ENCODE measurements at regions of chr9 and their contacts with region 1.

Region 1: DNA sequence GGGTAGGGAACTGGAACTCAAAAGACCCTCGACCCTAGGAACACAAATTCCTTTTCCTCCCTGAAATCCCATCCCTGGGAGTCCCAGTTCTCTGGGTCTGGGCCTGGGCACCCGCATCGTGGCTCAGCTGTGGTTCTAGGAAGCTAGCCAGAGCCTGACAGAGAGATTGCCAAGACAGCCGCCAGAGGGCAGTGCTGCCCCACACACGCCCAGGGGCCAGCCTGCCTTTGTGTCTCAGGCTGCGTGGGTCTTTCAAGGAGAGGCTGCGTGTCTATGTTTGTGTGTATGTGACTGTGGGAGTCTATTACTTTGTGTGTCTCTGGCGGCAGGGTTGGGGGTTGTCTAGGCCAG is 32.0 kb upstream of the TTLL11 start:
- DNase-seq: peak; percentile 93
- H3K4me3 Mint-ChIP-seq: no peak overlapping the region
- H3K27ac Mint-ChIP-seq: no peak overlapping the region
- H3K4me1 Mint-ChIP-seq: peaks cover 16% of the 10 kb centered on the region
- H3K27me3 Mint-ChIP-seq: peaks cover 40% of the 10 kb centered on the region

Region 2: GRCh38 chr9:122099271-122099869 is 25.8 kb before region 1 on chr9:
- intact Hi-C with region 1: loop called (anchors 1 kb)
- DNase-seq: peak; percentile 93
- H3K4me3 Mint-ChIP-seq: peak overlapping the region; percentile 24
- H3K27ac Mint-ChIP-seq: no peak overlapping the region
- H3K4me1 Mint-ChIP-seq: peaks cover 16% of the 10 kb centered on the region
- H3K27me3 Mint-ChIP-seq: peaks cover 28% of the 10 kb centered on the region

Region 3: DNA sequence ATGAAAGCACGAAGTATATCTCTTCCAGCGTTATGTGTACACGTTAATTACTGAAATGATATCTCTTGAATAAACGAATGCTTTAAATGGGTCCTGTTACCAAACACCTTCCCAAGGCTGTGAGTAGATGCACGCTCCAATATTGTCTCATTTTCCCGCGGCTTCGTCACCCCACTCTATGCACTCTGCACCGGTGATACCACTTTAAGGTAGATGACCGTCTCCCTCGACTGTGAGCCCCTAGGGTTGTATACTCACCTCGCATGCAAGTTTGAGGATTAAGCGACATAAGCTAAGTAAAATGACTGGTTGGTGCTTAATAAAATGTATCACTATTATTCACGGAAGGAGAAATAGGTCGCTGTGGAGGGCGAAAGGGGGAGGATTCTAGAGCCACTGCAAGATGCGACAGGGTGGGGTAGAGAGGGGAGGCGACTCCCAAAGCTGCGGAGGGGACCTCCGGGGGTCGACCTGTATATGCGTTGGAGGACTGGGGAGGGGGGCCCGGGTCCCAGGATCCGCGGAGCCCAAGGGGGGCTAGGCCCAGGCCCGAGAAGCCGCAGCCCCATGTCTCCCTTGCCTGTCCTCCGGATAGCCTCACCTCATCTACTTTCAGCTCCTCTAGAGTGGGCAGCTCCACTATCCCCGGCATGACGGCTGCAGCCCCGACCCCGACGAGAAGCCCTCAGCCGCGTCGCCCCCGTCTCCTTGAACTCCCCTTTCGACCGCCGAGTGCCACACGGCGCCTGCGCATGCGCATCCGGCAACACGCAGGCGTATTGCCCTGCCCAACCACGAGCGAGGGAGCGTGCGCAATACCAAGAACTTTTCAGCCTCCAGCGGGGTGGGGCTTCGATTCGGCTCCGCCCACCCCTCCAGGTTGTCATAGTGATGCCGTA is 34.1 kb after region 1 on chr9 and contains the starts of genes MORN5 and NDUFA8:
- intact Hi-C with region 1: loop called (anchors 2 kb)
- DNase-seq: peak; percentile 99
- H3K4me3 Mint-ChIP-seq: peak within 1 kb of the TSS; percentile 99
- H3K27ac Mint-ChIP-seq: peak within 1 kb of the TSS; percentile 98
- H3K4me1 Mint-ChIP-seq: peaks cover 27% of the 10 kb centered on the region
- H3K27me3 Mint-ChIP-seq: peaks cover 28% of the 10 kb centered on the region
- total RNA-seq, gene MORN5: not detected in 2 replicates
- total RNA-seq, gene NDUFA8: 50.4 and 51.9 TPM in 2 replicates

Region 4: GRCh38 chr9:122190609-122191381 is 65.7 kb after region 1 on chr9:
- intact Hi-C with region 1: no loop called
- DNase-seq: no peak
- H3K4me3 Mint-ChIP-seq: no peak overlapping the region
- H3K27ac Mint-ChIP-seq: no peak overlapping the region
- H3K4me1 Mint-ChIP-seq: peaks cover 2% of the 10 kb centered on the region
- H3K27me3 Mint-ChIP-seq: no peaks in the 10 kb centered on the region

Region 5: GRCh38 chr9:122350638-122351355 is 225.7 kb after region 1 on chr9:
- intact Hi-C with region 1: loop called (anchors 1 kb)
- DNase-seq: peak; percentile 94
- H3K4me3 Mint-ChIP-seq: no peak overlapping the region
- H3K27ac Mint-ChIP-seq: no peak overlapping the region
- H3K4me1 Mint-ChIP-seq: peaks cover 22% of the 10 kb centered on the region
- H3K27me3 Mint-ChIP-seq: peaks cover 38% of the 10 kb centered on the region

Region 6: GRCh38 chr9:122453677-122454135 is 328.6 kb after region 1 on chr9:
- intact Hi-C with region 1: loop called (anchors 10 kb)
- DNase-seq: no peak
- H3K4me3 Mint-ChIP-seq: no peak overlapping the region
- H3K27ac Mint-ChIP-seq: no peak overlapping the region
- H3K4me1 Mint-ChIP-seq: peaks cover 2% of the 10 kb centered on the region
- H3K27me3 Mint-ChIP-seq: peaks cover 20% of the 10 kb centered on the region

Region 7: DNA sequence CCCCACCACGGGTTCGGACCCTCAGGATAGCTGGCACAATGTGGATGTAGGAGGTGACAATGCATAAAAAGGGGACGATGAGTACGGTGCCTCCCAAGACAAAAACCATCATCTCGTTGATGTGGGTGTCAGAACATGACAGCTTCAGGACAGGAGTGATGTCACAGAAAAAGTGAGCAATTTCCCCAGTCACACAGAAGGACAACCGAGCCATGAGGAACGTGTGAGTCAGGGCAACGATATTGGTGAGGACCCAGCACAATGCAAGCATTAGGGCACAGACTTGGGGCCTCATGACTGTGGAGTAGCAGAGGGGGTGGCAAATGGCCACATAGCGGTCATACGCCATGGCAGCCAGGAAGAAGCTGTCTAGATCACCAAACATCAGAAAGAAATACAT is 401.5 kb after region 1 on chr9:
- intact Hi-C with region 1: no loop called
- DNase-seq: no peak
- H3K4me3 Mint-ChIP-seq: no peak overlapping the region
- H3K27ac Mint-ChIP-seq: no peak overlapping the region
- H3K4me1 Mint-ChIP-seq: no peaks in the 10 kb centered on the region
- H3K27me3 Mint-ChIP-seq: no peaks in the 10 kb centered on the region